ENCODE measurements at regions of chr3 and their contacts with region 1.

Region 1: DNA sequence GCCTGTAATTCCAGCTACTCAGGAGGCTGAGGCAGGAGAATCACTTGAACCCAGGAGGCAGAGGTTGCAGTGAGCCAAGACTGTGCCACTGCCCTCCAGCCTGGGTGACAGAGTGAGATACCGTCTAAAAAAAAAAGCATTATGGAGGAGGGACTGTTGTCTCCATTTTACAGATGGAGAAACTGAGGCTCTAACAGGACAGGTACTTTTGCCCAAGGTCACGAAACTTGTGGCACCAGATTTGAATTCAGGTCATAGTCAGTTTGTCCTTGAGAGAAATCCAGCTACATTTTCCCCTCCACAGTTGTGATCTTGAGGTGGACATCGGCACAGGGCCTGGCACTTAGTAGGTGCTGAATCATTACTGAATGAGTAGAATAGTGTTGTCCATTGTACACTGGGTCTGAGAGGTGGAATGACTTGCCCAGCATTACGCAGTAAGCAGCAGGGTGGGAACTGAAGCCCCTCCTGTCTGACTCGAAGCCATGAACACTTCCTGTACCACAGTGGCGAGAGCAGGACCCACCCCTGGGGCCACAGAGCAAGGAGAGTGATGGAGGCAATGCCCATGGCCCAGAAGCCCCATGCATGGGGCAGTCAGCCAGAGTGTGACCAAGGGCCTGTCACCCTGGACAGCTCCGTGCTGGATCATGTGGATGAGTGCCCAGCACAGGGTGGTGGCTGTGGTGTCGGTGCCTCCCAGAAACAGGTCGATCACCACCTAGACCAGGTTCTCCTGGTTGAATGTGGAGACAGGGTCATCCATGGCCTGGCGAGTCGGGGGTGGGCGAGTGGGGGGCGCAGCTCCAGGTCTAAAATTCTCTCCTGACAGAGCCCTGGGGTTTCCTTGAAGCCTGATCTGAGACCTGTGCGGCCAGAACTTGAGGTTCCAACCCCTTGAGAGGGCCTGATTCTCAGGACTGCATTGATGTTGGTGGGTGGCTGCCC is 20.4 kb upstream of the PARL start:
- DNase-seq: no peak
- ATAC-seq: peak in 3 of 8 donors; percentile 49 to 66 (median 53)
- H3K4me3 ChIP-seq: no peak overlapping the region
- H3K27ac ChIP-seq: no peak overlapping the region
- H3K4me1 ChIP-seq: no peaks in the 10 kb centered on the region
- H3K27me3 ChIP-seq: peaks cover 0 to 8% (median 0%) of the 10 kb centered on the region in 7 donors
- CTCF ChIP-seq: no peak

Region 2: DNA sequence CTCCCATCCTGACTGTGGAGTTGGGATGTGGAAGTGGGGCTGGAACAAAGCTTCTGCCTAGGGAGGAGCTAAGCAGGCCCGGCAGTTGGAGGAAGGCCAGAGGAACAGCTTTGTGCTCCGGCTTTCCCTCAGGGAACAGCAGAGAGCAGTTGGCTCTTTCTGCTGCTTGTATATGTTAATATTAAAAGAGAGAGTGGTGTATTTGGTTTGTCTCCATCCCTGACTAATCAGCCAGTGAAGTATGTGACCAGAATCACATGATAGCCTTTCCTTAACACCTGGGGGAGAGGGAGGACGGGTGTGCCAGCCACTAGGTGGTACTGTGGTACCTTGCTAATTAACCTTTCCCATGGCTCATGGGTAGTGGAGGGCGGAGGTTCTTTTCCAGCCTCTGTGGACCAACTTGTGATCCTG is 240.0 kb after region 1 on chr3:
- intact Hi-C with region 1: loop called in 1 of 10 experiments (anchors 10 kb)
- DNase-seq: peak; percentile 36 to 49
- ATAC-seq: peak; percentile 45 to 78 (median 70)
- H3K4me3 ChIP-seq: no peak overlapping the region
- H3K27ac ChIP-seq: peak overlapping the region in 1 of 10 donors; percentile 25
- H3K4me1 ChIP-seq: peaks cover 0 to 10% (median 0%) of the 10 kb centered on the region in 9 donors
- H3K27me3 ChIP-seq: no peaks in the 10 kb centered on the region
- CTCF ChIP-seq: peak in 8 of 9 donors; percentile 18 to 56 (median 45)

Region 3: DNA sequence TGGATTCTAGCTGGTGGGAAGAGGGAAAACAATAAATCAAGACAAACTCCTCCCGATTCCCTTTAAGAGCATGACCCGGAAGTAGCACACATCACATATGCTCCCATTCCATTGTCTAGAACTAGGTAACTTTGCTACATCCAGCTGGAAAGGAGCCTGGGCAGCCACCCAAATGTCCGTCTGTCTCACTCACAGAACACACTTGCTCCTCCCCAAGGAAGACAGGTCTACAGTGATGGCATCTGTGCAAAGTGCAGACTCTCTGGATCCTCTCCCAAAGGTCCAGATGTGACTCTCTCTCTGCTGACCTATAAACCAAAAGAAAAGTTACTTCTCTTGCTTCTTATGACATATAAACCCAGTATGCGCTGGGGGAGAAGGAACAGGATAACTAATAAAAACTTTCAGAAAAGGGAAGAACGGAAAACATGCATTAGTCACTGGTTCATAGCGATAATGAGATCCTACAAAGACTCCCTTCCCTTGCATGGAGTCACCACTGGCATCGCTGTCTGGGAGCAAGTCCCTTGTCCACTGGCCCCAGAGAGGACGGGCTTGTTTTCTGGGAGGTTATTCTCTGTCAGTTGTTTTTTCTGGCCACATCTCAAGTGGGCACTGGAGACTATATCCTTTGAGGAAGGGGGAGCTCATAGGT is 626.6 kb after region 1 on chr3:
- intact Hi-C with region 1: loop called in 1 of 10 experiments (anchors 10 kb)
- DNase-seq: no peak
- ATAC-seq: peak in 3 of 8 donors; percentile 30 to 64 (median 44)
- H3K4me3 ChIP-seq: no peak overlapping the region
- H3K27ac ChIP-seq: peak overlapping the region in 1 of 10 donors; percentile 39
- H3K4me1 ChIP-seq: peaks cover 0 to 15% (median 0%) of the 10 kb centered on the region in 9 donors
- H3K27me3 ChIP-seq: peaks cover 0 to 56% (median 10%) of the 10 kb centered on the region in 7 donors
- CTCF ChIP-seq: no peak

Measured in heart right ventricle (tissue), 16 donors.